Ascending aorta (tissue), 2 donors: ENCODE measurements at regions of chr1 and their contacts with region 1.

Region 1: DNA sequence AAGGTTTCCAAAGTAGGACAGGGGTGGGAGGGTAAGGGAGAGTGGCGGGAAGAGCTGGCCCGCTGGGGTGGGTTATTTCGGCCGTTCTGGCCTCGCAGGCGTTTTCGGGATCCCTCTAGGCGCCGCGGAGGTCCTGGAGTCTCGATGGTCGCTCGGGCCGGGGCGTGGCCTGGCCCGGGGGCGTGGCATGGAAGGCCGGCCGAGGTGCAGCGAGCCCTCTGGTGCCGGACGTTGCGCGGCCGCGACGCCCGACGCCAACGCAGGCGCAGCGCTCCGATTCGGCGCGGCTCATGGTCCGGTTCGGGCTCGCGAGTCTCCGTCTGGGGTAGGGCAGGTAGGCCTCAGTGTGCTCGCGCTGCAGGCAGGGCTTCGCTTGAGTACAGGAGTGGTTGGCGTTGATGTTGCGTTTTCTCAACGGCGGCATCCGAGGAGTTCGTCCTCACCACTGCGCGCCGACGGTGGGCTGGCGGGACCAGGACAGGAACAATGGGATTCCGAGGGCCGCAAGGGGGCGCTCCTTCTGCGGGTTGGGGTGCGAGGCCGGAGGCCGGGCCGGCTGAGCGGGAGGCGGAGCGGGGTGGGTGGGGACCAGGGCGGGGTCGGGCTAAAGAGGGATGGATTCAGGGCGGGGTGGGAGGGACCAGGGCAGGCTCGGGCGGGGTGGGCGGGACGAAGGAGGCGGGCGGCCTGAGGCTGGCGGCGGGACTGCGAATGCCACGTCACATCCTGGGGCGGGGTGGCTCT is at the start of gene PGBD2:
- DNase-seq: peak; percentile 45 to 94
- H3K4me3 ChIP-seq: peak within 1 kb of the TSS; percentile 71 to 75
- H3K27ac ChIP-seq: peak within 1 kb of the TSS; percentile 82 to 95
- H3K4me1 ChIP-seq: peaks cover 0 to 6% of the 10 kb centered on the region in 2 donors
- H3K27me3 ChIP-seq: no peaks in the 10 kb centered on the region
- CTCF ChIP-seq: peak; percentile 48 to 64 (median 61)
- total RNA-seq, gene PGBD2: 0.53 TPM

Region 2: DNA sequence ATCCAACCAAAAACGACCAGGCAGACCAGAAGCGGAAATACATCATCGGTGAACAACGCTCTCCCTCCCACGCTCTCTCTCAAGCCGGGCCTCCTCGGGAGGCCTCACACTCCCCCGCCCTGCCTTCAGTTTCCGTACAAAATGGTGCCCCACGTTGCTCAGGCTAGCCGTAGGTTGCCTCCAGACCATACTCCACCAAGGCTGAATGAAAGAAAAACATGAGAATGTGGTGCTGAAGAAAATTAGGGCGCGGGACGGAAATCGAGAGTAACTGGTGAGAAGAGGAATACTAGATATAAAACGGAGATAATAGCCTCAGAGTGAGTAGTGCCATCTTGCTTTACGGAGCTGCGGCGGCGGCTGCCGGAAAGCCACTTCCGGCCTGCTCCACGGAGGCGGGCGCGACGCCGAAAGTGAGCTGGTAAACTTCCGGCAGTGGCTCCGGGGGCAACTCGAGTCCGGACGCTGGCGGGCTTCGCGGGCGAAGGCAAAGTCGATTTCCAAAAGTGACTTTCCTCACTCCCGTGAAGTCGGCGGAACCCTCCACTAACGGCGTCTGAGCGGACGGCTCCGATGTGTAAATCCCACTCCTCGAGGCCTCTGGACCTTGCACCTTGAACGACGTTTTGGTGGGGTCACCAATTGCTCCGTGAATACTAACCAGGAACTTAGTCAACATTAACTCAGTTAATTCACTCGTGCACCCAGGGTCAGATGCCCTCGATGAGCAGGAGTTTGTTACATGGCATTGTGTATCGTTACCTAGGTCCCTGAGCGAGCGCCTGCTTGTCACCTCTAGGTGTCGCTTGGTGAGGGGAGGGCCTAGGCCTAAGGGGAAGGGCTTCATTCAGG is 80.0 kb before region 1 on chr1 and contains the start of gene SH3BP5L:
- intact Hi-C with region 1: loop called (anchors 1 kb)
- DNase-seq: peak; percentile 68 to 95
- H3K4me3 ChIP-seq: peak within 1 kb of the TSS; percentile 80 to 90
- H3K27ac ChIP-seq: peak within 1 kb of the TSS; percentile 88 to 93
- H3K4me1 ChIP-seq: peaks cover 18 to 45% of the 10 kb centered on the region in 2 donors
- H3K27me3 ChIP-seq: no peaks in the 10 kb centered on the region
- CTCF ChIP-seq: peak; percentile 43 to 70 (median 57)
- total RNA-seq, gene SH3BP5L: 15.9 TPM

Region 3: GRCh38 chr1:248858891-248859889 is 47.0 kb before region 1 on chr1 and contains the start of gene ZNF692:
- intact Hi-C with region 1: loop called (anchors 1 kb)
- DNase-seq: peak; percentile 86 to 99
- H3K4me3 ChIP-seq: peak within 1 kb of the TSS; percentile 69
- H3K27ac ChIP-seq: peak within 1 kb of the TSS; percentile 83 to 90
- H3K4me1 ChIP-seq: peaks cover 11 to 25% of the 10 kb centered on the region in 2 donors
- H3K27me3 ChIP-seq: no peaks in the 10 kb centered on the region
- CTCF ChIP-seq: no peak
- total RNA-seq, gene ZNF692: 13.8 TPM

Region 4: GRCh38 chr1:248873409-248873992 is 32.7 kb before region 1 on chr1:
- intact Hi-C with region 1: loop called (anchors 1 kb)
- DNase-seq: peak; percentile 86 to 98
- H3K4me3 ChIP-seq: peak overlapping the region; percentile 70 to 79
- H3K27ac ChIP-seq: peak overlapping the region; percentile 97 to 99
- H3K4me1 ChIP-seq: no peaks in the 10 kb centered on the region
- H3K27me3 ChIP-seq: no peaks in the 10 kb centered on the region
- CTCF ChIP-seq: no peak